ENCODE measurements at regions of chr14 and their contacts with region 1.

Region 1: GRCh38 chr14:21092273-21093011 is 6.0 kb downstream of the ZNF219 start:
- DNase-seq: no peak
- H3K4me3 ChIP-seq: no peak overlapping the region
- H3K27me3 ChIP-seq: no peaks in the 10 kb centered on the region
- CTCF ChIP-seq: peak; percentile 100

Region 2: GRCh38 chr14:20989572-20990551 is 102.6 kb before region 1 on chr14 and contains the start of gene METTL17:
- CTCF ChIA-PET with region 1: interaction called, 11 read pairs
- POLR2A ChIA-PET with region 1: no interaction called
- DNase-seq: peak; percentile 94
- H3K4me3 ChIP-seq: peak within 1 kb of the TSS; percentile 91
- H3K27me3 ChIP-seq: no peaks in the 10 kb centered on the region
- CTCF ChIP-seq: peak; percentile 48
- polyA plus RNA-seq, gene METTL17: 49.8 and 56.2 TPM in 2 replicates

Region 3: DNA sequence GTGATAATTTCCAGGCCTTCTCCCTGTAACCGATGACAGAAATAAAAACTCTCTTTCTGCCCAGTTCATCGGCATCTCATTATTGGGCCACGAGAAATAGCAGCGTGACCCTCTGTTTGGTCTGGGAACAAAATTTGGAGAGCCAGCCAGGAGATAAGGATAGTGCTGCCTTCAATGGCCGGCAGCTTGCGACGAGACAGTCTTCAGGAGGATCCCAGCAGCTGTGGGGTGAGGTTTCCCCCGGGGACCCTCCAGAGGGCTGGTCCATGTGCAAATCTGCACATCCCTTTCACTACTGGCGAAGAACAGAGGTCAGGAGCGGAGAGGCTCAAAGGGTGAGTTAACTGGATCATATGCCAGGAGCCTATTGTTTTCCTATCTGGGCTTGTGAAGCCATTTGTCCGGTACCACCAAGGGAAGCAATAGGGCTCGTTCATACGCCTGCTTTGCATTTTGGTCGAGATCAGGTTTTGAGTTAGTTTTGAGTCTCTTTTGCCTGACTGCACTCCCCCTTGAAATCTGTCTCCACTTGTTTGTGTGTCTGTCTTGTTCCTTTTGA is 88.6 kb before region 1 on chr14:
- CTCF ChIA-PET with region 1: interaction called, 202 read pairs
- POLR2A ChIA-PET with region 1: no interaction called
- DNase-seq: no peak
- H3K4me3 ChIP-seq: no peak overlapping the region
- H3K27me3 ChIP-seq: no peaks in the 10 kb centered on the region
- CTCF ChIP-seq: no peak

Region 4: DNA sequence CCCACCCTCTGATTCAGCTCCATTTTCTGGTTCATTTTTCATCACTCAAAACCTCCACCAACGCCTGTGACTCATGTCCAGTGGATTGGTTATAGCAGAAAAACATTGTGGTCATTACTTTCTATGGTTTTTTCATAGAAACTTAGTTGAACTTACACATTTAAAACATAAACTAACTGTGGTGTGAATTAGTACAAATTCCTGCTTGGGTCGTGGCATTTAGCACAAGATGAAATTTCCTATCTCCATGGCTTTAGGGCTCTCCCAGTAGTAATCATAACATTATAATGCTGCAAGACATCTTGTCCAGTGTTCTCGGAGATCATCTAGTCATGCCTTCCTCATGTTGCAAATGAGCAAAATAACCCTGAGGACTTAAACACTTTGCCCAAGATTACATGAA is 43.2 kb before region 1 on chr14:
- CTCF ChIA-PET with region 1: interaction called, 22 read pairs
- POLR2A ChIA-PET with region 1: no interaction called
- DNase-seq: no peak
- H3K4me3 ChIP-seq: no peak overlapping the region
- H3K27me3 ChIP-seq: peaks cover 2% of the 10 kb centered on the region; the same call in 1 of the 2 replicates
- CTCF ChIP-seq: no peak

Region 5: DNA sequence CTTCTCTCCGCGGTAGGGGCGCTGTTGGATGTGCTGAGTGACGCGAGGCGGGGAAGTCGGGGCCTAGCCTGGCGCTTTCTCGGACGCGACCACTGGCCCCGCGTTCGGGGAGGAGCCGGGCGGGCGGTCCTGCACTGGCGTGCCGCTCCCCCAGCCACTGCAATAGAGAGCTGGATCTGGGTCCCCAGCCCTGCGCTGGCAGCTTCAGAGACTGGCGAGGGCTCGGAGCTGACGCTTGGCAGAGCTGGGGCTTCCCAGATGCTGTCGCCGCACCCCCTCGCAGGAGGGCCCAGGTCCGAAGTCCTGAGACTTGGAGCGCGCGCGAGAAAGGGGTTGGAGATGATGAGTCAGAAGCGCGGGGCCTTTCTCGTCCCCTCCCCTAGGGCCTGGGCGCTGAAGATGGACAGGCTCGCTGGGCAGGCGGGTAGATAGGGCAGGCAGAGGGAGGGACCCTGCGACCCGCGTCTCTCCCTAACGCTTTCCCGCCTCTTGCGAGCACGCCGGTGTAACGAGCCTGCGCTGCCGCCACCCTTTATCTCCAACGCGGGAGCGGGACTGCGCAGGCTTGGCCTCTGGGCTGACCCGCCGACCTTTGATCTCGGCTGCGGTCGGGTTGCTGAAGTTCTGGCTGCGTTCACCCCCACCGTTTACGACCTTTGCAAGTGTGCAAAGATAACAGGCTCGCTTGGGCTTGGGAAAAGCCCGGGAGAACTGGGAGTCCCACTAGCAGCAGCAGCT is 11.4 kb after region 1 on chr14:
- CTCF ChIA-PET with region 1: interaction called, 175 read pairs
- POLR2A ChIA-PET with region 1: no interaction called
- DNase-seq: peak; percentile 67
- H3K4me3 ChIP-seq: peak overlapping the region; percentile 69
- H3K27me3 ChIP-seq: 0 out of 2 replicates have a peak, but pooled peaks cover 1% of the 10 kb centered on the region
- CTCF ChIP-seq: peak; percentile 89